Caco-2 (cell line): ENCODE measurements at regions of chr7 and their contacts with region 1.

Region 1: DNA sequence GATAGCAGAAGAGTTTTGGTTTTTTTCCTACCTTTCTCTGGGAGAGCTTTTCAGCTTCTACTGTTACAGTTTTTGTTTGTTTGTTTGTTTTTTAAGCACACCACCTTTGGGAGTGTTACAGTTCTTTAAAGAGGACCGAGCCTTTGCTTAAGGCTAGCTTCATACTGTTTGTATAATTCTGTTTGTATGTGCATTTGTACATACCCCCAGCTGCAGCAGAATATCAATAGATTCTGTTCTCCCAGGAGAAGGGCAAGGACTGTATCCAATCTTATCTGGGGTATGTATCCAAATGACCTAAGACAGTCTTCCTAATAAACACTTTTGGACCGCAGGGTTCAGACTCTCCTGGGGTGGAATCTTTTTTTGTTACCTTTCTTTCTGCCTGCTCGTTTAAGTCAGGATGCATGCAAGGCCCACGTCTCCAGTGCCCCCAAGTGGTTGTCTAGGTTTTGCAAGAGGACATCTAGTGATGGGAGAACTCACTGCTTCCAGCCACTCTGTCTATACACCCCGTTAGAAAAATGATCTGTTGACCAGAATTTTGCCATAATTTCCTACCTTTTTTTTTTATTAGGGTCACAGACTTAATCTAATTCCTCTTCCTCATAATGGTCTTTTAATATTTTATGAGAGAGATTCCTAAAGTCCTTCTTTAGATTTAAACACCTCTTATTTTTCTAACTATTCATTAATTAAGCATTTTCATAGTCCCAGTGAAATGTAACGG is 23.9 kb downstream of the NRF1 start:
- DNase-seq: peak; percentile 79
- H3K4me3 ChIP-seq: no peak overlapping the region
- H3K4me3 Mint-ChIP-seq: no peak overlapping the region
- H3K27ac Mint-ChIP-seq: no peak overlapping the region
- H3K4me1 ChIP-seq: 0 out of 2 replicates have a peak, but pooled peaks cover 6% of the 10 kb centered on the region
- H3K4me1 Mint-ChIP-seq: no peaks in the 10 kb centered on the region
- H3K27me3 ChIP-seq: no peaks in the 10 kb centered on the region
- H3K27me3 Mint-ChIP-seq: no peaks in the 10 kb centered on the region
- CTCF ChIP-seq: peak; percentile 86 to 92

Region 2: DNA sequence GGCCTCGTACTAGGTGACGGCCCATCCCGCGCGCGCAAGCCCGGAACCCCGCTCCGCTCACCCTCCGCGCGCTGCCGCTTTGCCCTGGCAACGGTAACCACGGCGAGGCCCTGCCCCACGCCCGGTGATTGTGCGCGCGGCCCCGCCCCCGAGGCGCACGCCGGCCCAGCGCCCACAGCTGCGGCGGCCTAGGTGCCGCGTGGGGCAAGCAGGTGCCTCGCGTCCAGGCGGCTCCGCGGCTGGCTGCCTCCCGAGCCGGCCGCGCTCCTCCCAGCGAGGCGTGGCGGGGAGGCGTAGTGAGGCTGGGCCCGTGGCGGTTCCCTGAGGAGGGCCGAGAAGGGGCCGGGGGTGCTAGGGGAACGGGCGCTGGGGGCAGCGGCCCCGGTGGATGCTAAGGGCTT is 133.1 kb before region 1 on chr7 and contains the start of gene SMKR1:
- CTCF ChIA-PET with region 1: no interaction called
- POLR2A ChIA-PET with region 1: no interaction called
- intact Hi-C with region 1: loop called (anchors 10 kb)
- DNase-seq: peak; percentile 66 to 79
- H3K4me3 ChIP-seq: peak within 1 kb of the TSS; percentile 62
- H3K4me3 Mint-ChIP-seq: peak within 1 kb of the TSS; percentile 66
- H3K27ac Mint-ChIP-seq: no peak within 1 kb of the TSS
- H3K4me1 ChIP-seq: peaks cover 5% of the 10 kb centered on the region
- H3K4me1 Mint-ChIP-seq: peaks cover 7% of the 10 kb centered on the region
- H3K27me3 ChIP-seq: no peaks in the 10 kb centered on the region
- H3K27me3 Mint-ChIP-seq: peaks cover 5% of the 10 kb centered on the region
- CTCF ChIP-seq: no peak
- total RNA-seq, gene SMKR1: not detected in 2 replicates

Region 3: GRCh38 chr7:129611246-129612111 is 24.0 kb before region 1 on chr7 and contains the start of gene NRF1:
- CTCF ChIA-PET with region 1: no interaction called
- POLR2A ChIA-PET with region 1: no interaction called
- intact Hi-C with region 1: loop called (anchors 1 kb)
- DNase-seq: peak; percentile 90 to 96
- H3K4me3 ChIP-seq: peak within 1 kb of the TSS; percentile 87
- H3K4me3 Mint-ChIP-seq: peak within 1 kb of the TSS; percentile 98
- H3K27ac Mint-ChIP-seq: peak within 1 kb of the TSS; percentile 97
- H3K4me1 ChIP-seq: peaks cover 10% of the 10 kb centered on the region; the same call in 1 of the 2 replicates
- H3K4me1 Mint-ChIP-seq: peaks cover 7% of the 10 kb centered on the region
- H3K27me3 ChIP-seq: no peaks in the 10 kb centered on the region
- H3K27me3 Mint-ChIP-seq: no peaks in the 10 kb centered on the region
- CTCF ChIP-seq: peak in 1 of 2 experiments; percentile 5
- total RNA-seq, gene NRF1: 22.5 and 23.0 TPM in 2 replicates

Region 4: GRCh38 chr7:130515315-130516040 is 880.0 kb after region 1 on chr7:
- CTCF ChIA-PET with region 1: no interaction called
- POLR2A ChIA-PET with region 1: no interaction called
- intact Hi-C with region 1: no loop called
- DNase-seq: no peak
- H3K4me3 ChIP-seq: no peak overlapping the region
- H3K4me3 Mint-ChIP-seq: no peak overlapping the region
- H3K27ac Mint-ChIP-seq: no peak overlapping the region
- H3K4me1 ChIP-seq: no peaks in the 10 kb centered on the region
- H3K4me1 Mint-ChIP-seq: no peaks in the 10 kb centered on the region
- H3K27me3 ChIP-seq: no peaks in the 10 kb centered on the region
- H3K27me3 Mint-ChIP-seq: no peaks in the 10 kb centered on the region
- CTCF ChIP-seq: no peak